Naive thymus-derived CD4-positive, alpha-beta T cell (primary cell): ENCODE measurements at regions of chr7 and their contacts with region 1.

Region 1: DNA sequence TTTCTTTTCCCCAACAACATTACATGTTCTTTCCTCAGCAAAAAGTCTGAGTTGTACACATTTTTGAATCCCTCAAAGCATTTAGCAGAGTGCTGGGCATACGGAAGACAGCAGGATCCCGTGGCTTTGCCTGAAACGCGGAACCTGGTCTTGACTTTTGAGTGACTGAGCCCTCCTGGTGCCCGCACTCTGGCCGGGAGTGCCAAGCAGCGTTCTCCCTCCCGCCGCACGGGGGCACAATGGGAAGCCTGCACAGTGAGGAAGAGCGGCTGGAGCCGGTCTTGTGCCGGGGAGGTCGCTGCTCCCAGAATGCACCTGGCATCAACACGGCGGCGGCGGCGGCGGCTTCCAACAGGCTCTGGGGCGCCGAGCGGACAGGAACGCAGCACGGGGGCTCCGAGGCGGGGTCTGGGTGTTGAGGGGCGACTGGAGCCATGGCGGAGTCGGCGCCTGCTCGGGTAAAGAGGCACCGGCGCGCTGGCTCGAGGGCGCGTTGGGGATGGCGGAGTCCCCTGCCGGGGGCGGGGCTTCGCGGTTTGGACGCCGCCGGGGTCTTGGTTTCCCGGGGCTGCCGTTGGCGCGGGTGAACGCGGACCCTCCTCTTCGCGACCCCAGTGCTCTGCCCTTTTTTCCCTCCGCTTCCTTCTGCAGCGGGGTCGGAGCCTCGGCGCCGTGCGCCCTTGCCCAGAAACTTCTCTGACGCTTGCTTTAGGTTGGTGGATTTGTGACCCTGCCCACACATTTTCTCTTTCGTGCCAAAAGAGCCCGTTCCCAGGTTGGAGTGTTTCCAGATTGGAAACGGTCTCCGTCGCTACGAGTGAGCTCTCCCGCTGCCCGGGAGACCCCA is at the start of gene ZNF212:
- DNase-seq: peak; percentile 75 to 89 (median 84)
- ATAC-seq: peak; percentile 100
- H3K4me3 ChIP-seq: peak within 1 kb of the TSS; percentile 90
- H3K4me3 Mint-ChIP-seq: peak within 1 kb of the TSS; percentile 85 to 95 (median 92)
- H3K27ac ChIP-seq: peak within 1 kb of the TSS; percentile 76
- H3K27ac Mint-ChIP-seq: peak within 1 kb of the TSS; percentile 71 to 89 (median 87)
- H3K4me1 ChIP-seq: peaks cover 14 to 16% of the 10 kb centered on the region in 2 donors
- H3K4me1 Mint-ChIP-seq: peaks cover 23 to 43% (median 33%) of the 10 kb centered on the region in 7 donors
- H3K27me3 ChIP-seq: no peaks in the 10 kb centered on the region
- H3K27me3 Mint-ChIP-seq: peaks cover 0 to 6% (median 0%) of the 10 kb centered on the region in 5 donors
- total RNA-seq, gene ZNF212: 10.4 to 20.6 (median 13.3) TPM

Region 2: DNA sequence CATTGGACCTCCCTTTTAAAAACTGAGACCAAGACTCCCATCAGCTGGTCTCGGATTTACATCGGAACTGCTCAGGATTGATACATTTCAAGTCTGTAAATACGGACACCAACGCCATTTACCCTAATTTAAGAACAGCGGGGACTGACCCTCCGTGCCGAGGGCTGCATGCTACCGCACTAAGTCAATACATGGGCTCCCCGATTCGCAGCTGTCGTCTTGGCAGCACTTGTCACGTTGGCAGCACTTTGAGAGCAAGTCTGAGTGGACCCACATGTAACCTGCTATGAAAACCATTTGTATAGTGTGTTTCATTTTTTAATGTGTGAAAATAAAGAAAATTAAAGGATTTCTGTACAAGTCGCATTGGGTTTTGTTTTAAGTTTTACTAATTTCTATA is 438.9 kb before region 1 on chr7:
- CTCF ChIA-PET with region 1: no interaction called
- POLR2A ChIA-PET with region 1: no interaction called
- intact Hi-C with region 1: no loop called
- DNase-seq: no peak
- ATAC-seq: no peak
- H3K4me3 ChIP-seq: no peak overlapping the region
- H3K4me3 Mint-ChIP-seq: no peak overlapping the region
- H3K27ac ChIP-seq: no peak overlapping the region
- H3K27ac Mint-ChIP-seq: no peak overlapping the region
- H3K4me1 ChIP-seq: no peaks in the 10 kb centered on the region
- H3K4me1 Mint-ChIP-seq: no peaks in the 10 kb centered on the region
- H3K27me3 ChIP-seq: no peaks in the 10 kb centered on the region
- H3K27me3 Mint-ChIP-seq: no peaks in the 10 kb centered on the region

Region 3: GRCh38 chr7:149229526-149229925 is 10.0 kb before region 1 on chr7:
- CTCF ChIA-PET with region 1: no interaction called
- POLR2A ChIA-PET with region 1: no interaction called
- intact Hi-C with region 1: no loop called
- DNase-seq: no peak
- ATAC-seq: no peak
- H3K4me3 ChIP-seq: no peak overlapping the region
- H3K4me3 Mint-ChIP-seq: no peak overlapping the region
- H3K27ac ChIP-seq: no peak overlapping the region
- H3K27ac Mint-ChIP-seq: no peak overlapping the region
- H3K4me1 ChIP-seq: no peaks in the 10 kb centered on the region
- H3K4me1 Mint-ChIP-seq: peaks cover 0 to 3% (median 0%) of the 10 kb centered on the region in 7 donors
- H3K27me3 ChIP-seq: no peaks in the 10 kb centered on the region
- H3K27me3 Mint-ChIP-seq: peaks cover 5 to 15% (median 7%) of the 10 kb centered on the region in 5 donors

Region 4: DNA sequence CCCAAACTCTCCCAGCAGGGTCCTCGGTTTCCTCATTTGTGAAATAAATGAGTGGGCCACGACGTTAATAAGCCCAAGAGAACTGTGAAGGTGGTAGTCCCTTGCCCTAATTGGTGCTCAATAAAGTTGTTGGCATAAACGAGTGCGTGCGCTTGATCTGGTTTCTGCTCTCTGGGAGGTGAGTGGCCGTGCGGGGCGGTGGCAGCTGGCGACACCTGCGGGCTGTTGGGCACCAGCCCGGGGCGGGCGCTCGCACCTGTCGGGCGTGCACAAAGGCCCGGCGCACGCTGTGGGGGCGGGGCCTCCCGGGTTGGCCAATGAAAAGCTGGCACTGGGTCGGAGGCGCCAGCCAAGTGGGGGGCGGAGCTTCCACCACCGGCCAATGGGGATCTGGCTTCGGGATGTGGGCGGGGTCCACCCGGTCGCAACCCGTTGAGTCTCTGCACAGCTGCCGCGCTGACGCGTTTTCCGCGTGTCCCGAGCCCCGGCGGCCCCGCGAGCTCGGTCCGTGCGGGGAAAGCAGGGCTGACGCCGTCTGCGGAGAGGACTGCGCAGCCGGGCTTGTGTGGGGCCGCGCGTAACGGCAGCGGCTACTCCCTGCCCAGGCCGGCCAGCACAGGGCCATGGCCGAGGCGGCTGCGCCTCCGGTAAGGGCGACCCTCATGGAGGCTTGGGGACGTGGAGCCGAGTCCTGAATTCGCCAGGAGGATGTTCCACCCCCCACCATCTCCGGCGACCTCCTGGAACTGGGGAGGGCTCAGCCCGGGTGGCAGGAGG is 45.5 kb after region 1 on chr7:
- CTCF ChIA-PET with region 1: interaction called, 8 read pairs
- POLR2A ChIA-PET with region 1: interaction called, 6 read pairs
- intact Hi-C with region 1: loop called in 1 of 2 experiments (anchors 1 kb)
- DNase-seq: peak; percentile 96 to 99 (median 98)
- ATAC-seq: peak; percentile 98
- H3K4me3 ChIP-seq: peak overlapping the region; percentile 80
- H3K4me3 Mint-ChIP-seq: peak overlapping the region; percentile 79 to 97 (median 92)
- H3K27ac ChIP-seq: peak overlapping the region; percentile 72
- H3K27ac Mint-ChIP-seq: peak overlapping the region; percentile 76 to 96 (median 93)
- H3K4me1 ChIP-seq: peaks cover 30 to 36% of the 10 kb centered on the region in 2 donors
- H3K4me1 Mint-ChIP-seq: peaks cover 26 to 55% (median 46%) of the 10 kb centered on the region in 7 donors
- H3K27me3 ChIP-seq: no peaks in the 10 kb centered on the region
- H3K27me3 Mint-ChIP-seq: no peaks in the 10 kb centered on the region

Region 5: GRCh38 chr7:149321978-149322541 is 82.5 kb after region 1 on chr7:
- CTCF ChIA-PET with region 1: no interaction called
- POLR2A ChIA-PET with region 1: no interaction called
- intact Hi-C with region 1: no loop called
- DNase-seq: peak in 2 of 9 donors; percentile 6
- ATAC-seq: no peak
- H3K4me3 ChIP-seq: peak overlapping the region; percentile 15
- H3K4me3 Mint-ChIP-seq: peak overlapping the region; percentile 1 to 74 (median 70)
- H3K27ac ChIP-seq: no peak overlapping the region
- H3K27ac Mint-ChIP-seq: peak overlapping the region in 6 of 9 donors; percentile 7 to 86 (median 64)
- H3K4me1 ChIP-seq: no peaks in the 10 kb centered on the region
- H3K4me1 Mint-ChIP-seq: peaks cover 7 to 29% (median 19%) of the 10 kb centered on the region in 7 donors
- H3K27me3 ChIP-seq: no peaks in the 10 kb centered on the region
- H3K27me3 Mint-ChIP-seq: peaks cover 7 to 12% (median 9%) of the 10 kb centered on the region in 5 donors

Region 6: GRCh38 chr7:149362696-149363095 is 123.1 kb after region 1 on chr7:
- CTCF ChIA-PET with region 1: no interaction called
- POLR2A ChIA-PET with region 1: no interaction called
- intact Hi-C with region 1: no loop called
- DNase-seq: no peak
- ATAC-seq: no peak
- H3K4me3 ChIP-seq: no peak overlapping the region
- H3K4me3 Mint-ChIP-seq: no peak overlapping the region
- H3K27ac ChIP-seq: no peak overlapping the region
- H3K27ac Mint-ChIP-seq: no peak overlapping the region
- H3K4me1 ChIP-seq: no peaks in the 10 kb centered on the region
- H3K4me1 Mint-ChIP-seq: no peaks in the 10 kb centered on the region
- H3K27me3 ChIP-seq: no peaks in the 10 kb centered on the region
- H3K27me3 Mint-ChIP-seq: peaks cover 0 to 18% (median 13%) of the 10 kb centered on the region in 5 donors